Left colon (tissue), 2 donors: ENCODE measurements at regions of chr1 and their contacts with region 1.

Region 1: GRCh38 chr1:71074681-71075080 is 6.2 kb downstream of the ZRANB2 start:
- DNase-seq: no peak
- ATAC-seq: no peak

Region 2: DNA sequence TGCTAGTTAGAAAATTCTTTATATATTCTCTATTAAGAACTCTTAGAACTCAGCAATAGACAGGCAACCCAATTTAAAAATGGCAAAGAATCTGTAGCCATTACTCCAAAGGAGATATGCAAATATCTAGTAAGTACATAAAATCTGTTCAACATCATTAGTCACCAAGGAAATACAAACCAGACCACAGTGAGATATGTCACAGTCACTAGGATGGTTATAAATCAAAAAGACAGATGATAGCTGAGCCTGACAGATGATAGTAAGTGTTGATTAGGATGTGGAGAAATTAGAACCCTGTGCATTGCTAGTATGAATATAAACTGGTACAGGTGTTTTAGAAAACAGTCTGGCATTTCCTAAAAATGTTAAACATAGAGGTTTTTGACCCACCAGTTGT is 826.9 kb before region 1 on chr1:
- intact Hi-C with region 1: loop called in 1 of 2 experiments (anchors 10 kb)
- DNase-seq: no peak
- ATAC-seq: no peak

Region 3: GRCh38 chr1:71196685-71197084 is 122.0 kb after region 1 on chr1:
- intact Hi-C with region 1: no loop called
- DNase-seq: no peak
- ATAC-seq: peak; percentile 57